Dendritic cell treated with granulocyte-macrophage colony-stimulating factor and Interleukin-4, amounts not matched to agents 40 ng/mL and 50 ng/mL, for 4 days (primary cell): ENCODE measurements at regions of chr1 and their contacts with region 1.

Region 1: DNA sequence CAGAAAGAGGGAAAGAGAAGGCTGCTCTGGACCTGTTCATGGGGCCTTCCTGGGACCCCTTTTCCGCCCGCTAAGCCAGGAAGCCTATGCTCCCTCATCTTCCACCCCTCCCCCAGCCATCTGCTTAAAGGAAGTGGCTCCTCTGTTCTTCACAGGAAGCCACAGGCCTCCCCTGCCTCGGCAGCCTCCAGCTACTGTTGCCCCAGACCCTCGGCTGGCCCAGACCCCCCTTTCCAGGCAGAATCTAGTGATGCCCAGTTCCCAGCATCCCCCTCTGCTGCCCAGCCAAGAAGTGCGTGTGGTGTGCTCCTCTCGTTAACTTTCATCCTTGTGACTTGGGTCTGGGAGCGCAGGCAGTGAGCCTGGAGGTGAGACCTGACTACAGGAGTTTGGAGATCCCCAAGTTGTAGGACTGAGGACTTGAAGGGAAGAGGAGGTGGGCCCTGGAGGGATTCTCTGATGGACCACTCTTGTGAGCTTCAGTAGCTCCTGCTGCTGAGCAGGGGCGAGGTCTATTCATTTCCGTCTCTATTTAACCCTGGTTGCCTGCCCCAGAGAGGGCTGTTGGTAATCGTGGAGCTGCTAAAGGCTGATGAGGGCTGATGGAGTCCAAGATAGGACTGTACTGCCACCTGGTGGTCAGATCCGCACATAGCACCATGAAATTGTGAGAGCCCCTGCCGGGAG is 9.1 kb downstream of the IFI6 start:
- H3K4me3 Mint-ChIP-seq: peak overlapping the region; percentile 10
- H3K27ac Mint-ChIP-seq: peak overlapping the region; percentile 95
- H3K4me1 Mint-ChIP-seq: peaks cover 81% of the 10 kb centered on the region
- H3K27me3 Mint-ChIP-seq: no peaks in the 10 kb centered on the region

Region 2: GRCh38 chr1:27402349-27402754 is 260.5 kb before region 1 on chr1:
- intact Hi-C with region 1: loop called (anchors 10 kb)
- H3K4me3 Mint-ChIP-seq: no peak overlapping the region
- H3K27ac Mint-ChIP-seq: peak overlapping the region; percentile 83
- H3K4me1 Mint-ChIP-seq: peaks cover 56% of the 10 kb centered on the region
- H3K27me3 Mint-ChIP-seq: peaks cover 2% of the 10 kb centered on the region

Region 3: DNA sequence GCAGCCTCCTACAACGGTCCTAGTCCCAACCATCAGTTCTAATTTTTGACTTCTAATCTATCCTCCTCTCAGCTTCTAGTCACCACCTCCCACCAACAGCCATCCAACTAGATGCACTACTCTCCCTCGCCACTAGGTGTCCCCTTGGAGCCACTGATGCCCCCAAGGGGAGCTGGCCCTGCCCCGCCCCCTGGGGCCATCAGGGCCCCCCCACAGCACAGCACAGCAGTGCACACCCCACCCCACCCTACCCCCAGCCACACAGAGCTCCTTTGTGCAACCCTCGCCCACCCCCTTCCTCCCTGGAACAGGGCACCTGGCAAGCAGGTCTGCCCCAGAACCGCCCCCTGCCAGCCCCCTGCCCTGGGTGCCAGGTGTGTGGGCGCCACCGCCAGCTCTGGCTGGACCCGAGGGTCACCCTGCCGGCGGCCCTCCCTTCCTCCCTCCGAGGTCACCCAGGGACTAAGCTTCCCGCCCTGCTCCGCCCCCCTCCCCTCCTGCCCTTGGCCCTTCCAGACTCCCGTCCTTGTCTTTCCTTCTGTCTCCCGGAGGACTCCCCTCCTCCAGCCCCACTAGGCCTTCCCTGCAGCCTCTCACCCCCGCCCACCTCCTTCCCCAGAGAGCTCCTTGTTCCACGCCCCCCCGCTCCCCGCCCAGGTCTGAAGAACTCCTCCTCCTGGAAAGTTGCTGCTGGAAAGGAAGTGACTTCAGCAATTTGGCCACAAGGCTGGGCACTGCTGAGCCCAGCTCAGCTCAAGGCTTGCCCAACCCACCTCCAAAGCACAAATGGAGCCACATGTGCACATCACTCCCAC is 105.9 kb before region 1 on chr1:
- intact Hi-C with region 1: loop called (anchors 1 kb)
- H3K4me3 Mint-ChIP-seq: peak overlapping the region; percentile 50
- H3K27ac Mint-ChIP-seq: peak overlapping the region; percentile 57
- H3K4me1 Mint-ChIP-seq: peaks cover 61% of the 10 kb centered on the region
- H3K27me3 Mint-ChIP-seq: peaks cover 5% of the 10 kb centered on the region